Activated CD4-positive, alpha-beta T cell treated with anti-CD3 and anti-CD28 coated beads, Interleukin-2, amount 10 ng/mL, durations not matched to agents 24 days and 14 days (primary cell): ENCODE measurements at regions of chr11 and their contacts with region 1.

Region 1: DNA sequence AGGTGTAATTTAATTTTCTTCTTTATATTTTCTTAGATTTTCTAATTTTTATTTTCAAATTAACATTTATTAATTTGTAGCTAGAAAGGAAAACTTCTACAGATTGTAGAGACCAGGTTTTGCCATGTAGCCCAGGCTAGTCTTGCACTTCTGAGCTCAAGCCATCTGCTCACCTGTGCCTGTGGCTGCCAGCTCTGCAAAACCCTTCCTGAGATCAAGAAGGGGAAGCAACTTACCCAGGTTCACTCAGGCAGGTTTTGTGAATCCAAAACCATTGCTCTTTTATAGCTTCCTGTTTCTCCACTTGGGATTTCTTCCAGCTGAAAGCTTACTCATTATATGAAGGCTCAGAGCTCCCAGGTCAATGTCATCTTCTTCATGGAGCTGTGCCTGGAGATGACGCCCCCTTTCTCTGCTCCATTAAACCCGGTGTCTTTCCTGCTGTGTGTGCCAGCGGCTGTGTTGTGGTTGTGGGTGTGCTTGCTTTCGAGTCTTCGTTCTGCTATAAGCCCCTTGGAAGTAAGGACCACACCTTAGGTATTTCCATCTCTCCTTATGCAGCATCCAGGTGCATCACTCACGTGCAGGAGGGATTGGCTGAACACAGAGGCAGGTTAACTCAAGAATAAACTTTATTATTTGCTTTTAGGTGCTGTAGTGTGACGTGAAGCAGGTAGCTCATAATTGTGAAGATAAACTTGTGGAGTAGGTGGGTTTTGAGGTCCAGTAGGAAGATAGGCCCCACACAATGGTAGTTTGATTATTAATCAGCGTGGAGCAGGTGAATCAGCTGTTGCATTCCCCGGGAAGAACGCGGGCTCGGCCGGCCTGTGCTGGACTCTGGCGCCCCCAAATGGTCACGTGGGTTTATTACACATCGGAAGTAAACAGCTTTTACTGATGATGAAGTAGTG is 42.2 kb upstream of the INCENP start:
- DNase-seq: peak; percentile 93
- H3K4me3 Mint-ChIP-seq: peak overlapping the region; percentile 17
- H3K27ac Mint-ChIP-seq: no peak overlapping the region
- H3K4me1 Mint-ChIP-seq: peaks cover 6% of the 10 kb centered on the region
- H3K27me3 Mint-ChIP-seq: peaks cover 6% of the 10 kb centered on the region

Region 2: DNA sequence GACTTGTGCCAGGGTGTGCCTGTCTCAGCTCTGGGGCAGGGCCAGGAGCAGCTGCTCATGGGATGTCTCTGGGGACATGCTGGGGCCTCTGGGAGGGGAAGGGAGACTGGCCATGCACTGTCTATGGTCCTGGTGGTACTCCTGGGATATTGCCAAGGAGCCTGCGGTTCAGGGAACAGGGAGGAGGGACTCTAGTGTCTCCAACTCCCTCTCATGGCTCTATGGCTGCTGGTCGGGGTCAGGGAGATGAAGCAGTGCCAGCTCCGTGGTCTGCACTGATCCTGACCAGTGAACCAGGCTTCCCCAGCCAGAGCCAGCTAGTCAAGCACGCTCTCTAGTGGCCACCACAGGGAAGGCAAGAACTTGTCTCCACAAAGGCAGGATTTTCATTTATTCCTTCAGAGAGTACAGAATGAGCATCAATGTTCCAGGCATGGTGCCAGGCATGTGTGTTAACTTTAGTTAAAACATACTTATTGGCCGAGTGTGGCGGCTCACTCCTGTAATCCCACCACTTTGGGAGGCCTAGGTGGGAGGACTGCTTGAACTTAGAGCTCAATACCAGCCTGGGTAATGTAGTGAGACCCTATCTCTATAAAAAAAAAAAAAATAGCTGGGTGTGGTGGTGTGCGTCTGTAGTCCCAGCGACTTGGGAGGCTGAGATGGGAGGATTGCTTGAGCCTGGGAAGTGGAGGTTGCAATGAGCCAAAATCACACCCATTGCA is 134.0 kb before region 1 on chr11:
- intact Hi-C with region 1: loop called (anchors 5 kb)
- DNase-seq: peak; percentile 91
- H3K4me3 Mint-ChIP-seq: no peak overlapping the region
- H3K27ac Mint-ChIP-seq: no peak overlapping the region
- H3K4me1 Mint-ChIP-seq: peaks cover 2% of the 10 kb centered on the region
- H3K27me3 Mint-ChIP-seq: peaks cover 8% of the 10 kb centered on the region

Region 3: GRCh38 chr11:62025487-62026105 is 56.0 kb before region 1 on chr11:
- intact Hi-C with region 1: no loop called
- DNase-seq: peak; percentile 93
- H3K4me3 Mint-ChIP-seq: peak overlapping the region; percentile 69
- H3K27ac Mint-ChIP-seq: peak overlapping the region; percentile 92
- H3K4me1 Mint-ChIP-seq: peaks cover 19% of the 10 kb centered on the region
- H3K27me3 Mint-ChIP-seq: no peaks in the 10 kb centered on the region